Heart right ventricle (tissue), 16 donors: ENCODE measurements at regions of chr3 and their contacts with region 1.

Region 1: GRCh38 chr3:24229468-24230221 is 265.0 kb downstream of the THRB start:
- DNase-seq: no peak
- ATAC-seq: no peak
- H3K4me3 ChIP-seq: no peak overlapping the region
- H3K27ac ChIP-seq: no peak overlapping the region
- H3K4me1 ChIP-seq: peaks cover 0 to 17% (median 8%) of the 10 kb centered on the region in 9 donors
- H3K27me3 ChIP-seq: no peaks in the 10 kb centered on the region
- CTCF ChIP-seq: no peak

Region 2: GRCh38 chr3:24069045-24069444 is 160.6 kb before region 1 on chr3:
- intact Hi-C with region 1: loop called in 4 of 10 experiments (anchors 5 to 10 kb)
- DNase-seq: no peak
- ATAC-seq: peak in 1 of 8 donors; percentile 37
- H3K4me3 ChIP-seq: no peak overlapping the region
- H3K27ac ChIP-seq: no peak overlapping the region
- H3K4me1 ChIP-seq: no peaks in the 10 kb centered on the region
- H3K27me3 ChIP-seq: no peaks in the 10 kb centered on the region
- CTCF ChIP-seq: peak in 6 of 9 donors; percentile 30 to 59 (median 48)

Region 3: DNA sequence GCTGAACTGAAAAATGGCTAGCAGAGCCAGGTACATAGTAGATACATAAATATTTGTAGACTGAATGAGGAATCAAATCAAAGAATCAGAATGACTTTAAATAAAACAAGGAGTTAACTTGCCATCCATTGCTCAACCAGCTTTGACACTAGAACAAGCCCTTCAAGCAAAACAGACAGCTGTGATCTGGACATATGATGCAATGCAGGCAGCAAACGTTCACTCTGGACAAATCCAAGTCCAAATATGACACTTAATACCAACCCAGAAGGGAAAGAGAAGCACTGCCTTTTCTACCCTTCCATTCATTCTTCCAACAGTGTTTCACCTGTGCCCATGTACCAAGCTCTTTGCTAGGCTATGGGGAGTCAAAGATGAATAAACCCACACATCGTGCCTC is 260.5 kb after region 1 on chr3:
- intact Hi-C with region 1: no loop called
- DNase-seq: no peak
- ATAC-seq: peak in 1 of 8 donors; percentile 27
- H3K4me3 ChIP-seq: no peak overlapping the region
- H3K27ac ChIP-seq: peak overlapping the region in 2 of 10 donors; percentile 4 to 9
- H3K4me1 ChIP-seq: peaks cover 0 to 59% (median 22%) of the 10 kb centered on the region in 9 donors
- H3K27me3 ChIP-seq: peaks cover 0 to 37% (median 0%) of the 10 kb centered on the region in 7 donors
- CTCF ChIP-seq: no peak